ENCODE measurements at regions of chr4 and their contacts with region 1.

Region 1: DNA sequence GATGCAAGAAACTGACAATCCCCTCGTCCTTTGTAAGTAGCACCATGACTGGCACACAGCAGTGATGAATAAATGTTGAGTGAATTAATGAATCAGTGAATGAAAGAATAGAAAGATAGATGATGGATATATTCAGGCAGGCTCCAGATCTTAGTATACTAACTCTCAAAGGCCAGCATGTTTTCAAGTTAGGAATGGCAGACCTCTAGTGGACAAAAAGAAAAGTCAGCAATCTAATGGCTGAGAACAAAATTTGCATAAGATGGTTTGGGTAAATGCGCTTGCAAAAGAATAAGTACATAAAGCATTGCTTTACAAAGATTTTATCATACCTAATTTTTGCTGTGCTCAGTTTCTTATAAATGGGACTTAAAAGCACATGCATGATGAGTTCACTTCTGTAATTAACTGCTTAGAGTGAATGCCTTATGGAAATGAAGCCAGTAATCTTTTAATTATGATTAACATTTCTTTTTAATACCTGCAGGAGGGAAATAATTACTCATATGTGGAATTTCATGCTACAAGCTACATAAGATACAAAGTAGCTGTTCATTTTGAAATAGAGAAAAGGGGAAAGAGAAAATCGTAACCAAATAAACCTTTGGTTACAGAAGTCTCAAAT is 126.9 kb upstream of the GPRIN3 start:
- DNase-seq: no peak
- H3K4me3 ChIP-seq: no peak overlapping the region
- H3K27ac ChIP-seq: no peak overlapping the region
- H3K4me1 ChIP-seq: no peaks in the 10 kb centered on the region
- H3K27me3 ChIP-seq: no peaks in the 10 kb centered on the region
- CTCF ChIP-seq: peak; percentile 24 to 65 (median 64)
- POLR2A ChIP-seq: no peak

Region 2: DNA sequence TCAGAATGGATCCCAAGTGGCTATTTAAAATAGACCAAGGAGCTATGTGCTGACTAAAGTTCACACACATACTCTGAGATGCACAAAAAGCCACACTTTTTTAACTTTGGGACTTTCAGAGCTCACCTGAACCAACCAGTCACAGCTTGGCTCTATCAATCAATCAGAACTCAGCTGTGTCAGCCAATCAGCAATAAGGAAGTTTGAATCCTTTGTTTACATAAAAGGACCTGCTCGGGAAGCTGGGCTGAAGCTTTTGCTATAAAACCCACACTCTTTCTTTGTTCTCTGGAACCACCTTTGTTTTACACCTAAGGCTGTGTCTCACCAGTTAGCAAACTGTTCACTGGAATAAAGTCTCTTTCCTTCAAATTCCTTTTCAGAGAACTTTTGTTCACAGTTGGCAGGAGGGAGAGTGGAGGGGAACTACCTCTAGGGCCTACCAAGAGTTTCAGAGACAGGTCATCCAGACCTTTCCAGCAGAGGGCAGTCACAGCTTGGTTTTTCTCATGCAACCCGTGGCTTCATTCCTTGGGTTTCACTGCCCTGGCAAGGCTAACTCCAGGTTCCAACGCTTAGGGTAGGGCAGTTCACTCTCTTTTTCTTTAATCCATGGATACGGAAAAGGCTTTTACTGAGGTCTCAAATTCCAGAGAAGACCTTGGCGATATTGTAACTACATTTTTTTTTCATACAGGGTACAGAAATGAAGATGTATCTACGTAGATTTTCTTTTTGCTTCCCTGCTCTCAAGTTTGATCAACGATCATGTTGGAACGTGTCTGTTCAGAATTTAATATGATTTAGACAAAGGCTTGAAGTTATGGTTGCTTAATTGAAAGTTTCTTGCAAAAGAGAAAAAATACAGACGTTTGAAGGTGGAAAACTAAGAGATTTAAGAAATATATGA is 207.6 kb before region 1 on chr4:
- intact Hi-C with region 1: loop called (anchors 10 kb)
- DNase-seq: no peak
- H3K4me3 ChIP-seq: no peak overlapping the region
- H3K27ac ChIP-seq: no peak overlapping the region
- H3K4me1 ChIP-seq: no peaks in the 10 kb centered on the region
- H3K27me3 ChIP-seq: no peaks in the 10 kb centered on the region
- CTCF ChIP-seq: peak; percentile 39 to 70 (median 45)
- POLR2A ChIP-seq: no peak